PC-3 (cell line): ENCODE measurements at regions of chr5 and their contacts with region 1.

Region 1: GRCh38 chr5:95471942-95472341 is 80.8 kb downstream of the FAM81B start:
- DNase-seq: peak; percentile 12
- ATAC-seq: peak; percentile 45
- H3K4me3 ChIP-seq: no peak overlapping the region
- H3K27ac ChIP-seq: no peak overlapping the region
- H3K4me1 ChIP-seq: no peaks in the 10 kb centered on the region
- H3K27me3 ChIP-seq: no peaks in the 10 kb centered on the region
- CTCF ChIP-seq: no peak

Region 2: DNA sequence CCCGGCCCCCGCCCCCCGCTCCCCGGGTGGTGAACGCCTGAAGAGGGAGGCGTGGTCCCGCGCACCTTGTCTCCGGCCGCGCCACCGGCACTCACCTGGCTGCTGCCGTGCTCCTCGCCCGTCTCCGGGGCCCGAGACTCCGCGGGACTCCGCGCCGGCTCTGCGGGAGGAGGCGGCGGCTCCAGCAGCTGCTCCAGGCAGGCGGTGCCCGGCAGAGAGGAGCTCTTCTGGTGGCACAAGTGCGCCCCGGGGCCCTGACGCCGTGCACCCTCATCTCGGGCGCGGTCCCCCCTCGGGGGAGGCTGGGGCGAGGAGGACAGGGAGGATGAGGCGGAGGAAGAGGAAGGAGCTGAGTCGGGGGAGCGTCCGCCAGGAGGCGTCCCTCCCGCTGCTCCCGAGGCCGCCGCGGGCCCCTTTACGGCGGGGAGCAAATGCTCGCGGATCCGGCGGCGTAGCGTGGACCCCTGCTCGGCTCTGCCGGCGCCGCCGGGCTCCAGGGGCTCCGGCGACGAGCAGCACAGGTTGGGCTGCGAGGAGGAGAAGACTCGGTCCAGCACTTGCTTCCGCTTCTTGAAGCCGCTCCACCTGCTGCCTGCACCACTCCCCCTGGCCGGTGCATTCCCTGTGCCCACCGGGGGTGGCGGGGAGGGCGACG is 188.1 kb before region 1 on chr5:
- CTCF ChIA-PET with region 1: no interaction called
- POLR2A ChIA-PET with region 1: no interaction called
- intact Hi-C with region 1: loop called (anchors 10 kb)
- DNase-seq: peak; percentile 27
- ATAC-seq: peak; percentile 56
- H3K4me3 ChIP-seq: peak overlapping the region; percentile 71
- H3K27ac ChIP-seq: no peak overlapping the region
- H3K4me1 ChIP-seq: peaks cover 5% of the 10 kb centered on the region; the same call in 1 of the 2 replicates
- H3K27me3 ChIP-seq: peaks cover 49% of the 10 kb centered on the region
- CTCF ChIP-seq: peak; percentile 53

Region 3: GRCh38 chr5:95401626-95402025 is 70.3 kb before region 1 on chr5:
- CTCF ChIA-PET with region 1: no interaction called
- POLR2A ChIA-PET with region 1: no interaction called
- intact Hi-C with region 1: no loop called
- DNase-seq: no peak
- ATAC-seq: no peak
- H3K4me3 ChIP-seq: no peak overlapping the region
- H3K27ac ChIP-seq: no peak overlapping the region
- H3K4me1 ChIP-seq: no peaks in the 10 kb centered on the region
- H3K27me3 ChIP-seq: no peaks in the 10 kb centered on the region
- CTCF ChIP-seq: no peak